OCI-LY7 (cell line): ENCODE measurements at regions of chr2 and their contacts with region 1.

Region 1: GRCh38 chr2:54503192-54503591 is 47.1 kb downstream of the SPTBN1 start:
- DNase-seq: peak; percentile 75
- H3K4me3 ChIP-seq: no peak overlapping the region
- H3K27ac ChIP-seq: no peak overlapping the region
- H3K4me1 ChIP-seq: peaks cover 12% of the 10 kb centered on the region
- CTCF ChIP-seq: peak; percentile 93

Region 2: GRCh38 chr2:54206596-54206995 is 296.6 kb before region 1 on chr2:
- CTCF ChIA-PET with region 1: no interaction called
- POLR2A ChIA-PET with region 1: no interaction called
- intact Hi-C with region 1: loop called (anchors 2 kb)
- DNase-seq: peak; percentile 49
- H3K4me3 ChIP-seq: no peak overlapping the region
- H3K27ac ChIP-seq: no peak overlapping the region
- H3K4me1 ChIP-seq: no peaks in the 10 kb centered on the region
- CTCF ChIP-seq: peak; percentile 92

Region 3: GRCh38 chr2:54341656-54342055 is 161.5 kb before region 1 on chr2:
- CTCF ChIA-PET with region 1: no interaction called
- POLR2A ChIA-PET with region 1: no interaction called
- intact Hi-C with region 1: loop called (anchors 10 kb)
- DNase-seq: peak; percentile 26
- H3K4me3 ChIP-seq: no peak overlapping the region
- H3K27ac ChIP-seq: no peak overlapping the region
- H3K4me1 ChIP-seq: no peaks in the 10 kb centered on the region
- CTCF ChIP-seq: peak; percentile 68